ENCODE measurements at regions of chr16 and their contacts with region 1.

Region 1: GRCh38 chr16:15650019-15650697 is at the start of gene NDE1:
- DNase-seq: no peak
- ATAC-seq: peak; percentile 96
- H3K4me3 ChIP-seq: peak within 1 kb of the TSS; percentile 99
- H3K27ac ChIP-seq: peak within 1 kb of the TSS; percentile 79
- H3K4me1 ChIP-seq: peaks cover 29% of the 10 kb centered on the region
- H3K27me3 ChIP-seq: no peaks in the 10 kb centered on the region
- CTCF ChIP-seq: no peak
- EP300 ChIP-seq: no peak
- POLR2A ChIP-seq: peak; percentile 84
- RAD21 ChIP-seq: no peak
- polyA plus RNA-seq, gene NDE1: 5.7 to 7.4 TPM

Region 2: DNA sequence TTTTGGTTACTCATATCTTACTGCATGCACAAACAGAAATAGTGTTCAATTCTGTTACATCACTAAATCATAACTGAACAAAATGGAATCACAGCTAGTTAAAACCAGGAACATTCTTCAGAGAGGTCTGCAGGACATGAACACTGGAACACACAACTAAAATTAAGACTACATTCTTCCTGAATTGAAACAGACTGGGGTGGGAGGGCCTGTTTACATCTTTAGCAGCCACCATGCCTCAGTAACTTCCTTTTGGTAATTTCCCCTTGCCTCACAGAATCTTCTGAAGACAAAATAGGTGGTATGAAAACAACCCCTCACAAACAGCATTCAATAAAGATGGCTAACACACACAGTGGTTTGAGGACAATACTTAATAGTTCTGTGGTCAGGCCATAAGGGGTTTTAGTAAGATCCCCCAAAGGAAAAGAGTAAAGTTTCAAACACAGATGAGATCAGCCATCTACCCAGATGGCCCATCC is 13.7 kb before region 1 on chr16:
- CTCF ChIA-PET with region 1: interaction called, 14 read pairs
- POLR2A ChIA-PET with region 1: interaction called, 29 read pairs
- RAD21 ChIA-PET with region 1: interaction called, 6 read pairs
- SMC1A ChIA-PET with region 1: interaction called, 20 read pairs
- in situ Hi-C with region 1: no loop called
- intact Hi-C with region 1: no loop called
- DNase-seq: no peak
- ATAC-seq: peak; percentile 62
- H3K4me3 ChIP-seq: peak overlapping the region; percentile 16; the same call in 1 of the 2 replicates
- H3K27ac ChIP-seq: peak overlapping the region; percentile 77
- H3K4me1 ChIP-seq: peaks cover 41% of the 10 kb centered on the region
- H3K27me3 ChIP-seq: no peaks in the 10 kb centered on the region
- CTCF ChIP-seq: no peak
- EP300 ChIP-seq: peak in 1 of 2 experiments; percentile 31; a peak in 1 of 4 replicates
- POLR2A ChIP-seq: no peak
- RAD21 ChIP-seq: no peak

Region 3: DNA sequence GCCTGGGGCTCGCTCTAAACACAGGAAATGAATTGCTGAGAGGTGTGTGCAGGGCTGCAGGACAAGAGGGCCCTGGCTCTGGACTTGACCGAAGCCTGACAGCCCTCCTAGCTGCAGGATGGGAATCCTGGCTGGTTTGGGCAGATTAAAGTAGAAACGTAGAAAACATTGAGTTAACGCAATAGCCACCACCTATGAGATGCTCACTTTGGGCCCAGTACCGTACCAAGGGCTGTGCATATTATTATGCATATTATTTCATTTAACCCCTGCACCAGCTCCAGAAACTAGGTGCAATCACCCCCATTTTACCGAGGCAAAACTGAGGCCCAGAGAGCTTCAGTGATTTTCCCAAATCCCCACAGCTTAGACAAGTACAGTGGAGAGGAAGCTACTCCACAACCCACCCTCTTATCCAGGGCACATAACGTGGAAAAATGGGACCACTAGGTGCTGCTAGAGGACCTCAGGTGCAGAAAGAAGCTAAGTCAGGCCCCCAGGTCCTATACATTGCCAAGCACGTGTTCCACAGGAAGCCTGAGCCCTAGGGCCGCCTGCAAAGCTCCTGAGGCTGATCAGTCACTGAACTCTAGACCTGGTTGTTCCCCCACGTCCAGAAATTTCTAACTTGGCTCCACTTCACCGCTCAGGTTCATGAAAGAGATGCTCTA is 127.5 kb after region 1 on chr16:
- CTCF ChIA-PET with region 1: no interaction called
- POLR2A ChIA-PET with region 1: no interaction called
- RAD21 ChIA-PET with region 1: no interaction called
- SMC1A ChIA-PET with region 1: no interaction called
- in situ Hi-C with region 1: no loop called
- intact Hi-C with region 1: no loop called
- DNase-seq: no peak
- ATAC-seq: peak; percentile 65
- H3K4me3 ChIP-seq: no peak overlapping the region
- H3K27ac ChIP-seq: no peak overlapping the region
- H3K4me1 ChIP-seq: no peaks in the 10 kb centered on the region
- H3K27me3 ChIP-seq: no peaks in the 10 kb centered on the region; a peak in 1 of 4 replicates
- CTCF ChIP-seq: peak; percentile 40 to 60 (median 54)
- EP300 ChIP-seq: no peak
- POLR2A ChIP-seq: no peak
- RAD21 ChIP-seq: peak; percentile 70

Measured in GM12878 (cell line).